ENCODE measurements at regions of chr3 and their contacts with region 1.

Region 1: GRCh38 chr3:152159328-152159727 is 109.4 kb upstream of the MBNL1 start:
- DNase-seq: peak in 1 of 2 donors; percentile 78
- H3K4me3 ChIP-seq: no peak overlapping the region
- H3K27ac ChIP-seq: peak overlapping the region; percentile 70 to 73
- H3K4me1 ChIP-seq: peaks cover 3 to 39% of the 10 kb centered on the region in 2 donors
- H3K27me3 ChIP-seq: no peaks in the 10 kb centered on the region
- CTCF ChIP-seq: no peak

Region 2: GRCh38 chr3:152121292-152121654 is 38.1 kb before region 1 on chr3:
- intact Hi-C with region 1: loop called (anchors 5 kb)
- DNase-seq: no peak
- H3K4me3 ChIP-seq: no peak overlapping the region
- H3K27ac ChIP-seq: peak overlapping the region; percentile 75
- H3K4me1 ChIP-seq: peaks cover 0 to 17% of the 10 kb centered on the region in 2 donors
- H3K27me3 ChIP-seq: no peaks in the 10 kb centered on the region
- CTCF ChIP-seq: no peak

Region 3: GRCh38 chr3:152199102-152199840 is 39.9 kb after region 1 on chr3:
- intact Hi-C with region 1: loop called (anchors 2 kb)
- DNase-seq: no peak
- H3K4me3 ChIP-seq: peak overlapping the region in 1 of 2 donors; percentile 58
- H3K27ac ChIP-seq: peak overlapping the region; percentile 89 to 90
- H3K4me1 ChIP-seq: peaks cover 8 to 42% of the 10 kb centered on the region in 2 donors
- H3K27me3 ChIP-seq: no peaks in the 10 kb centered on the region
- CTCF ChIP-seq: no peak

Region 4: DNA sequence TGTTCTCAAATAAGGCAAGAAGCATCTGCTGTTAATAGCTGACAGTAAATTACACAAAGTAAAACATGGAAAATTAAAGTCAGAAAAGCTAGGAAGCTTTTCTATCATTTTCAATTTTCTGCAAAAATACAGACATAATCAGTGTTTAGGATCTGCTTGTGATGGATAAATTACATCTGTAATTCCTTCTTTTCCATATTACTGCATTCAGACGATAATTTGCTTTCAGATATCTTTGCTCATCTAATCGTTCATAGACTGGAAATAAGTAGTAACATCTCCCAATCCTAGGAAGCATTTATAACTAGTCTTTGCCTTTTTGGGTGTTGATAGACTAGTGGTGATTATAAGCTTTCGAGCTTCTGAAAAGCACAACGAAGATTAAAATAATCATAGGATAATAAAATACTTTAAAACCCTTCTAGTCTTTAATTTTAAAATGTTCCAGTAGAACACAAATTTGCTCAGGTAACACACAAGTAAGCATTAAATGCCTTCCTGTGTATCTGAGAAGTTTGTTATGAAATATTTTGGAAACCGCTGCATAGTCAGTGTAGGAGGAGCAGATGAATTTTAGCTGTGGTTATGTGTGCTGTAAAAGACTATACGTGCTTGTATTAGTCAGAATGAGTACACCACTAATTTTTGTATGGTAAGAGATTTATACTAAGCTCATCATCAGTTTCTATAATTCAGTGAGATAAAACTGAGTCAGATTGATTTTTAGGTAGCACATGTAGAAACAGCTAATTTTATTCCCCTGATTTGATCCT is 150.4 kb after region 1 on chr3:
- intact Hi-C with region 1: no loop called
- DNase-seq: no peak
- H3K4me3 ChIP-seq: peak overlapping the region; percentile 9 to 28
- H3K27ac ChIP-seq: peak overlapping the region; percentile 83
- H3K4me1 ChIP-seq: peaks cover 17 to 70% of the 10 kb centered on the region in 2 donors
- H3K27me3 ChIP-seq: no peaks in the 10 kb centered on the region
- CTCF ChIP-seq: no peak